MCF 10A (cell line): ENCODE measurements at regions of chr1 and their contacts with region 1.

Region 1: DNA sequence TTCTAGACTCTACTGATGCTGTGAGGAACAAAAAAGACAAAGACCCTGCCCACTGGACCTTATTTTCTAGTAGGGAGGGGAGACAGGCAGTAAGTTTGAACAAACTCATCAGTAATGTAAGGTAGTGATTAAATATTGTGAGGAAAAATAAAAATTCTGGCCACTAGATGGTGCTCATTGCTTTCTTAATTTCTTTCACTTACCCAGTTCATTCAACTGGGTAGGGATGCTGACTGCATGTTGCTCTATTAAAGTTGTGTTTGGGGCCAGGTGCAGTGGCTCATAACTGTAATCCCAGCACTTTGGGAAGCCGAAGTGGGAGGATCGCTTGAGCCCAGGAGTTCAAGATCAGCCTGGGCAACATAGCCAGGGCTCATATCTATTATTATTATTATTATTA is 6.3 kb upstream of the KYAT3 start:
- DNase-seq: peak; percentile 75
- H3K4me3 Mint-ChIP-seq: no peak overlapping the region
- H3K27ac Mint-ChIP-seq: no peak overlapping the region
- H3K4me1 Mint-ChIP-seq: no peaks in the 10 kb centered on the region
- H3K27me3 Mint-ChIP-seq: no peaks in the 10 kb centered on the region
- CTCF ChIP-seq: peak; percentile 36

Region 2: GRCh38 chr1:89022167-89022959 is 23.6 kb after region 1 on chr1 and contains the start of gene GBP3:
- CTCF ChIA-PET with region 1: interaction called, 19 read pairs
- POLR2A ChIA-PET with region 1: interaction called, 6 read pairs
- intact Hi-C with region 1: no loop called
- DNase-seq: peak; percentile 59
- H3K4me3 Mint-ChIP-seq: peak within 1 kb of the TSS; percentile 80
- H3K27ac Mint-ChIP-seq: peak within 1 kb of the TSS; percentile 86
- H3K4me1 Mint-ChIP-seq: peaks cover 15% of the 10 kb centered on the region
- H3K27me3 Mint-ChIP-seq: no peaks in the 10 kb centered on the region
- CTCF ChIP-seq: no peak
- total RNA-seq, gene GBP3: 19.4 and 20.1 TPM in 2 replicates

Region 3: DNA sequence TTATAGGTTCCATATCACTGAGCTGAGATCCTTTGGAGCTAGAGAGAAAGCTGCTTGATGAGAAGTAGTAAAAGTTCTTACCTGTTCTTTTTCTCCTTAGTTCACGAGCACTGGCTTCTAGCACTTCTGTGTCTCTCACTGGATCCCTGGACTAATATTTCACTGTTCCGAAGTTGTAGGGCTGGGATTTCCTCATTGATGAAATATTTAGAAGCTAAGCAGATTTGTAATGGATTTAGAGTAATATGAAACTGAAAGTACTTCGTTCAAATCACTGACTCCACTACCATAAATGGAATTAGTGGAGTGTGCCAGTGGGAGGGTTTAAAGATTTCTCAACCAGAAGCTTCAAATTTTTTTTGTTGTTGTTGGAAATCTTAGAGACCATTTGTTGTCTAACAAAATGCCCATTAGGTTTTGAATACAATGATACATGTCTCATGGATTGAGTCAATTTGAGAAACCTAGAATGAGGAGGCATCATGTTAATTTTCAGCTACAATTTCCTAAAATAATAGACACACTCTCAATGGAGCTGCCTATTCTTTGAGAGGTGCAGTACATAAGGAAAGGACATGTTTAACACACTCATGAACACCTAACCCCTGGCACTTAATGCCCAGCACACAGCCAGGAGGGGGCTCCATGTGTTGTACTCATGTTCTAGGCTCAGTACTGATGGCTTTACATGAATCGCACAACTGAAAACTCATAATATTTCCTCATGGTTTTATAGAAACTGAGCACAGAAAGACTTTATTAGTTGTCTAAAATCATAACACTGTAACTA is 66.6 kb after region 1 on chr1 and contains the start of gene GBP1:
- CTCF ChIA-PET with region 1: interaction called, 7 read pairs
- POLR2A ChIA-PET with region 1: interaction called, 3 read pairs
- intact Hi-C with region 1: loop called (anchors 5 kb)
- DNase-seq: peak; percentile 79
- H3K4me3 Mint-ChIP-seq: peak within 1 kb of the TSS; percentile 76
- H3K27ac Mint-ChIP-seq: peak within 1 kb of the TSS; percentile 91
- H3K4me1 Mint-ChIP-seq: peaks cover 13% of the 10 kb centered on the region
- H3K27me3 Mint-ChIP-seq: no peaks in the 10 kb centered on the region
- CTCF ChIP-seq: no peak
- total RNA-seq, gene GBP1: 10.4 and 10.6 TPM in 2 replicates

Region 4: GRCh38 chr1:89085781-89086180 is 87.1 kb after region 1 on chr1:
- CTCF ChIA-PET with region 1: interaction called, 11 read pairs
- POLR2A ChIA-PET with region 1: interaction called, 3 read pairs
- intact Hi-C with region 1: loop called (anchors 1 kb)
- DNase-seq: peak; percentile 73
- H3K4me3 Mint-ChIP-seq: no peak overlapping the region
- H3K27ac Mint-ChIP-seq: no peak overlapping the region
- H3K4me1 Mint-ChIP-seq: no peaks in the 10 kb centered on the region
- H3K27me3 Mint-ChIP-seq: no peaks in the 10 kb centered on the region
- CTCF ChIP-seq: peak; percentile 65

Region 5: GRCh38 chr1:89276690-89277089 is 278.0 kb after region 1 on chr1:
- CTCF ChIA-PET with region 1: interaction called, 5 read pairs
- POLR2A ChIA-PET with region 1: no interaction called
- intact Hi-C with region 1: loop called (anchors 2 kb)
- DNase-seq: peak; percentile 27
- H3K4me3 Mint-ChIP-seq: no peak overlapping the region
- H3K27ac Mint-ChIP-seq: no peak overlapping the region
- H3K4me1 Mint-ChIP-seq: peaks cover 11% of the 10 kb centered on the region
- H3K27me3 Mint-ChIP-seq: no peaks in the 10 kb centered on the region
- CTCF ChIP-seq: no peak

Region 6: GRCh38 chr1:89358287-89358893 is 359.7 kb after region 1 on chr1:
- CTCF ChIA-PET with region 1: interaction called, 74 read pairs
- POLR2A ChIA-PET with region 1: interaction called, 3 read pairs
- intact Hi-C with region 1: loop called (anchors 1 kb)
- DNase-seq: peak; percentile 81
- H3K4me3 Mint-ChIP-seq: no peak overlapping the region
- H3K27ac Mint-ChIP-seq: no peak overlapping the region
- H3K4me1 Mint-ChIP-seq: peaks cover 10% of the 10 kb centered on the region
- H3K27me3 Mint-ChIP-seq: no peaks in the 10 kb centered on the region
- CTCF ChIP-seq: peak; percentile 60

Region 7: GRCh38 chr1:89454845-89455521 is 456.3 kb after region 1 on chr1:
- CTCF ChIA-PET with region 1: interaction called, 58 read pairs
- POLR2A ChIA-PET with region 1: interaction called, 3 read pairs
- intact Hi-C with region 1: loop called (anchors 1 kb)
- DNase-seq: peak; percentile 61
- H3K4me3 Mint-ChIP-seq: no peak overlapping the region
- H3K27ac Mint-ChIP-seq: no peak overlapping the region
- H3K4me1 Mint-ChIP-seq: peaks cover 5% of the 10 kb centered on the region
- H3K27me3 Mint-ChIP-seq: no peaks in the 10 kb centered on the region
- CTCF ChIP-seq: peak; percentile 44